Right ventricle myocardium superior (tissue), 1 donor: ENCODE measurements at regions of chr5 and their contacts with region 1.

Region 1: DNA sequence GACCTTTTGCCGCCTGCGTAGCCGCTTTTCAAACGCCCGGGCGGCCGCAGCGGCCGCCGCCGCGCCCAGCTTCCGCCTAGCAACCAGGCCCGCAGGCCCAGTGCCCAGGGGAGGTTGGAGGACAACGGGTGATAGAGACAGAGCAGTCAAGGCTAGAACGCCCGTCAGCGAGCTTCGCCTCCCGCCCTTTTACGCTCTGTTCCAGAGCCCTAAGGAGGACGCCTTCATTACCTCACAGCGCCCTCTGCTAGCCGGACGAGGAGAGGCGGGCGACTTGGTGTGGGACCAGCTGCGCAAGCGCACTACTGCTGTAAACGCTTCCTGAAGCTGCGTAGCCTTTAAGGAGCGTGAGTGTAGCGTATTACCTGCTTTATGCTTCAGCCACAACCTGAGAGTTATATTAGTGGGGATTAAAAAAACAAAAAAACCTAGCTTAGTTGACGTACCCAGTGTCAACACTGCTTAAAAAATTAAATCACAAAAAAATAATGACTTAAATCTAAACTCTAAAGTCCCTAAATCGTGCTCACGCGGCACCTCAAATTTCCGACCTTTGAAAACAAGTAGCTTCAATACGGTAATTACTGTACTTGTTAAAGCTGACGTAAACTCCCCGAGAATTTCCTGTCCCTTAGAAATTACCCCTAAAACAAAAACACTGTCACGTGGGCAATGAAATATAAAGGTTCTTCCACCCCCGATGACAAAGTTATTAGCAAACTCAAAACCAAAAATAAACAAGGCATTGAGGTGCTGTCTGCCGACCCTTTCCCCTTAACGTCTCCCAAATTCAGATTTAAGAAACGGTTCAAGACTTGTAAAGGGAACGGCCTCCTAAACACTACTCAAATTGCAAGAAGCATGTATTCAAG is at the start of gene CEP120:
- DNase-seq: peak; percentile 100
- ATAC-seq: peak; percentile 99
- total RNA-seq, gene CEP120: 12.8 TPM

Region 2: DNA sequence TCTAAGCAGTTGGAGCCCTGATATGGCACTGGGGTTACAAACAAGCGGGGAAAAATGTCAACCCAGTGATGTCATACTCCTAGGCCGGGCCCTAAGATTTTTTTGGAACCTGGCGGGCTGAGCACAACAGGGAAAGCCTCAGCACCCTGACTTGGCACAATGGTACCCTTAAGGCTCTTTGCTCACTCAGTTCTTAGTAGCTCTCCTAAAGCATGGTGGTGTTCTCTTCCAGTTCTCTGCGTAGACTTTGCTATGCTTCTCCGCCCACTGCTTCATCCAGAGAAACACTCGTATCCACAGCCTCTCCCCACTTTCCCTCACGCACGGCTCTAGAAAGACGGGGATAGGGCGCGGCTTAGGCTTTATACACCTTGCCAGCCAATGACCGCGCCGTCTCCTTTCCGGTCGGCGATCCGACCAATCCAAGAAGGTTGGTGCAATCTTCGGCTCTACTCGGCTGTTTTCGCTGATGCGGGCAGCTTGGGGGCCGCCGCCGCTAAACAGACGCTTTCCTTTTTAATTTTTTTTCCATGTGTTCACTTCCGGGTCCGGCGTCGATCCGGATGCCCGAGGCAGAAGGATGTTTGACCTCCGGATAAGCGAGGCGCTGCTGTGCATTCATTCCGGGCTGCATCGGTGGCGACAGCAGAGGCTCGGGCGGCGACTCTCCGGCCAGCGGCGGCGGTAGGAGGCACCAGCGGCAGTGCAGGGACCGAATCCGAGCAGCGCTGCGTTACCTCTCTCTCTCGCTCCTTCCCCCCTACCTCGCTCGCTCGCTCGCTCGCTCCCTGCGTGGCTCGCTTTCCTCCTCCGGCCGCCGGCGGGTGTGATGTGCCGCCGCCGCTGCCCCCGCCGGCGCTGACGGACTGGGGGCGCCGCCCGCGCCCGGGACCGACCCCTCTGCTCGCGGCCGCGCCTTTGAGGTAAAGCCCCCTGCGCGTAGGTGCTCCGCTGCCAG is 88.4 kb after region 1 on chr5 and contains the start of gene CSNK1G3:
- intact Hi-C with region 1: loop called (anchors 2 kb)
- DNase-seq: peak; percentile 97
- ATAC-seq: peak; percentile 99
- total RNA-seq, gene CSNK1G3: 23.6 TPM

Region 3: DNA sequence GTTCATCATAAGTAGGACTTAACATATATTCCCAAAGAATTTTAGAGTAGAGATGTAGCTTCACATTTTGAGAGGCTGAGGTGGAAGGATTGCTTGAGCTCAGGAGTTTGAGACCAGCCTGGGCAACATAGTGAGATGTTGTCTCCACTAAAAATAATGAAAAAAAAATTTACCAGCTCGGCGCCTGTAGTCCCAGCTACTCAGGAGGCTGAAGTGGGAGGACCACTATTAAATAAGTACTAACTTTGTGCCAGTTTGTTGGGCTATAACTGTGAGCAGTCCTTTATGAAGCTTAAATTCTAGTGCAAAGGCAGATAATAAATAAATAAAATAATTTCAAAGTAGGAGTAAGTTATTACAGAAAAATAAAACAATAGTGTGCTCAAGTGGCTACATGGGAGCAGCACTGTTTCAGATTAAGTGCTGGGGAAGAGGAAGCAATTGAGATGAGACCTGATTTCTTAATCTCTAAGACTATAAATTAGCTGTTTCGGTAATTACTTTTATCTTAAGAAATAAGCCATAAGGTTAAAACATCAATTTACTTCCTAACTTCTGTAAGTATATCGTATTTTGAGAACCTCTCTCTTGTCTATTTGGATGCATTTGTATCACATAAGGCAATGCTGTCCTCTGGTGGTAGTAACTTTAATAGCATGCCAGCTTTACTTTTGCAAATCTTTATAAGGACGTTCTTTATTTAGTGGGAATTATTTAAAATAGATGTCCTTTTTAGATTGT is 187.3 kb after region 1 on chr5:
- intact Hi-C with region 1: loop called (anchors 5 kb)
- DNase-seq: no peak
- ATAC-seq: peak; percentile 73